ENCODE measurements at regions of chr2 and their contacts with region 1.

Region 1: DNA sequence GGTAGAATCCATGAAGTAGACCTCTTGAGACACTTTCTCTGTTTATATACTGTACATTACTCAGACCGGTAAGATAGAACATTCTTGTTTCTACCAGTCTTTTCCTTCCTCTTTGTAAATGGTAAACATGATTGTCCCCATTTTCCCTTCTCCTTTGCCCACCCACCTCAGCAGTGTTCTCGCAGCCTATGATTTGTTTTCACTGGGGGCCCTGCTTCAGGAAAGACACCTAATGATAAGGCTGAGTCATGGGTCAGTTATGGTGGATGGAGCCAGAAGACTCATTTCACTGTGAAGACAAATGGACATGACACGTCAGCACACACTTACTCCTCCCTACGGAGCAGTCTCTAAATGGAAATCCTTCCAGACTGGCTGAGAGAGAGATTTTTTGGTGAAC is 23.7 kb downstream of the CENPO start:
- DNase-seq: no peak
- ATAC-seq: no peak
- H3K4me3 ChIP-seq: no peak overlapping the region
- H3K4me3 Mint-ChIP-seq: no peak overlapping the region
- H3K27ac ChIP-seq: no peak overlapping the region
- H3K27ac Mint-ChIP-seq: no peak overlapping the region
- H3K4me1 ChIP-seq: no peaks in the 10 kb centered on the region
- H3K4me1 Mint-ChIP-seq: no peaks in the 10 kb centered on the region
- H3K27me3 ChIP-seq: no peaks in the 10 kb centered on the region
- H3K27me3 Mint-ChIP-seq: no peaks in the 10 kb centered on the region

Region 2: DNA sequence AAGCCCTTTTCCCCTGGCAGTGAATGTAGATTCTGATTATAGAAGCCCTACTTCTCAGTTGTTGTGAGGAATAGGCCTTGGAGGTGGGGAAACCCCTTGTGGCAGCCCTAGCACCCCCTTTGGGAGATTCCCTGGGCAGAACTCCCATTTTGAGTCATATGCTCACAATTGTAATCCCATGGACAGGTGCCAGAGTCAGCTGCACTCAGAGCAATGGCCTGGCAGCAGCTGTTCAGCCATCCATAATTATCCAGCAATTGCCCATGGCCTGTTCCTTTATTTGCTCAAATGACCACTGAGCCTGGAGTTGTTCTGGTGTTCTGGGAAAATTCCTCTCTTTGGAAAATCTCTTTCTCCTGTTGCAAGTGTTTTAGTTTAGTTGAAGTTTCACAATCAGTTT is 95.4 kb before region 1 on chr2:
- CTCF ChIA-PET with region 1: no interaction called
- POLR2A ChIA-PET with region 1: interaction called in 1 of 2 experiments, 12 read pairs
- DNase-seq: no peak
- ATAC-seq: no peak
- H3K4me3 ChIP-seq: no peak overlapping the region
- H3K4me3 Mint-ChIP-seq: no peak overlapping the region
- H3K27ac ChIP-seq: no peak overlapping the region
- H3K27ac Mint-ChIP-seq: no peak overlapping the region
- H3K4me1 ChIP-seq: no peaks in the 10 kb centered on the region
- H3K4me1 Mint-ChIP-seq: peaks cover 0 to 2% (median 0%) of the 10 kb centered on the region in 3 donors
- H3K27me3 ChIP-seq: no peaks in the 10 kb centered on the region
- H3K27me3 Mint-ChIP-seq: no peaks in the 10 kb centered on the region

Measured in T-cell (primary cell).